Calu3 (cell line): ENCODE measurements at regions of chr17 and their contacts with region 1.

Region 1: GRCh38 chr17:52084176-52084575 is 74.3 kb downstream of the CA10 start:
- DNase-seq: no peak
- H3K4me3 Mint-ChIP-seq: no peak overlapping the region
- H3K27ac Mint-ChIP-seq: no peak overlapping the region
- H3K4me1 Mint-ChIP-seq: no peaks in the 10 kb centered on the region
- H3K27me3 Mint-ChIP-seq: peaks cover 24% of the 10 kb centered on the region
- CTCF ChIP-seq: no peak

Region 2: GRCh38 chr17:51982189-51982588 is 102.0 kb before region 1 on chr17:
- CTCF ChIA-PET with region 1: no interaction called
- intact Hi-C with region 1: loop called (anchors 5 kb)
- DNase-seq: no peak
- H3K4me3 Mint-ChIP-seq: no peak overlapping the region
- H3K27ac Mint-ChIP-seq: no peak overlapping the region
- H3K4me1 Mint-ChIP-seq: no peaks in the 10 kb centered on the region
- H3K27me3 Mint-ChIP-seq: peaks cover 53% of the 10 kb centered on the region
- CTCF ChIP-seq: no peak

Region 3: GRCh38 chr17:52027620-52028295 is 56.4 kb before region 1 on chr17:
- CTCF ChIA-PET with region 1: no interaction called
- intact Hi-C with region 1: no loop called
- DNase-seq: no peak
- H3K4me3 Mint-ChIP-seq: no peak overlapping the region
- H3K27ac Mint-ChIP-seq: peak overlapping the region; percentile 61
- H3K4me1 Mint-ChIP-seq: peaks cover 24% of the 10 kb centered on the region
- H3K27me3 Mint-ChIP-seq: no peaks in the 10 kb centered on the region
- CTCF ChIP-seq: no peak